ENCODE measurements at regions of chr17 and their contacts with region 1.

Region 1: GRCh38 chr17:58932964-58933363 is 173.7 kb downstream of the TRIM37 start:
- DNase-seq: no peak
- H3K4me3 ChIP-seq: no peak overlapping the region
- H3K27ac ChIP-seq: no peak overlapping the region
- H3K4me1 ChIP-seq: no peaks in the 10 kb centered on the region
- H3K27me3 ChIP-seq: no peaks in the 10 kb centered on the region
- CTCF ChIP-seq: no peak
- POLR2A ChIP-seq: no peak

Region 2: GRCh38 chr17:57995076-57995956 is 937.6 kb before region 1 on chr17:
- intact Hi-C with region 1: loop called (anchors 10 kb)
- DNase-seq: peak; percentile 59 to 74
- H3K4me3 ChIP-seq: no peak overlapping the region
- H3K27ac ChIP-seq: peak overlapping the region; percentile 27 to 37
- H3K4me1 ChIP-seq: peaks cover 0 to 5% of the 10 kb centered on the region in 2 donors
- H3K27me3 ChIP-seq: no peaks in the 10 kb centered on the region
- CTCF ChIP-seq: peak; percentile 56 to 82 (median 82)
- POLR2A ChIP-seq: no peak

Region 3: GRCh38 chr17:58703137-58703972 is 229.6 kb before region 1 on chr17:
- intact Hi-C with region 1: no loop called
- DNase-seq: no peak
- H3K4me3 ChIP-seq: no peak overlapping the region
- H3K27ac ChIP-seq: no peak overlapping the region
- H3K4me1 ChIP-seq: no peaks in the 10 kb centered on the region
- H3K27me3 ChIP-seq: no peaks in the 10 kb centered on the region
- CTCF ChIP-seq: no peak
- POLR2A ChIP-seq: no peak

Measured in breast epithelium (tissue), 4 donors.